ENCODE measurements at regions of chr15 and their contacts with region 1.

Region 1: DNA sequence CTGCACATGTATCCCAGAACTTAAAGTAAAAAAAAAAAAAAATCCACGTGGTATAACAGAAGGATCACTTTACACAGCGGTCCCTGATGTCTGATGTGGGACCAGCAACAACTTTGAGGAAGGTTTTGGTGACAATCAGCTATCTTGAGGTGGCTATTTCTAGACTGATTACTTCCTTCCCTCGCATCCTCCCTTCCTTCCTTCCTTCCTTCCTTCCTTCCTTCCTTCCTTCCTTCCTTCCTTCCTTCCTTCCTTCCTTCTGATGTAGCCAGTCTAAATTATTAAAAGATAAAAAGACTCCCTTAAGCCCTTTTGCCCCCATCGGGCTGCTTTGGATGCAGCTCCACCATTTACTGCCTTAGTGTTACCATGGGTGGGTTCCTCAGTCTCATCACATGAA is 14.9 kb downstream of the SORD start:
- DNase-seq: no peak
- ATAC-seq: no peak
- H3K4me3 ChIP-seq: no peak overlapping the region
- H3K4me3 Mint-ChIP-seq: no peak overlapping the region
- H3K27ac ChIP-seq: no peak overlapping the region
- H3K27ac Mint-ChIP-seq: no peak overlapping the region
- H3K4me1 ChIP-seq: peaks cover 2% of the 10 kb centered on the region
- H3K4me1 Mint-ChIP-seq: peaks cover 19% of the 10 kb centered on the region
- H3K27me3 ChIP-seq: no peaks in the 10 kb centered on the region
- H3K27me3 Mint-ChIP-seq: no peaks in the 10 kb centered on the region
- CTCF ChIP-seq: no peak

Region 2: GRCh38 chr15:44573386-44573785 is 464.6 kb before region 1 on chr15:
- CTCF ChIA-PET with region 1: interaction called, 12 read pairs
- POLR2A ChIA-PET with region 1: no interaction called
- intact Hi-C with region 1: loop called (anchors 2 to 5 kb)
- DNase-seq: no peak
- ATAC-seq: no peak
- H3K4me3 ChIP-seq: no peak overlapping the region
- H3K4me3 Mint-ChIP-seq: no peak overlapping the region
- H3K27ac ChIP-seq: no peak overlapping the region
- H3K27ac Mint-ChIP-seq: peak overlapping the region; percentile 76
- H3K4me1 ChIP-seq: peaks cover 3% of the 10 kb centered on the region
- H3K4me1 Mint-ChIP-seq: peaks cover 12% of the 10 kb centered on the region
- H3K27me3 ChIP-seq: no peaks in the 10 kb centered on the region
- H3K27me3 Mint-ChIP-seq: no peaks in the 10 kb centered on the region
- CTCF ChIP-seq: no peak

Region 3: DNA sequence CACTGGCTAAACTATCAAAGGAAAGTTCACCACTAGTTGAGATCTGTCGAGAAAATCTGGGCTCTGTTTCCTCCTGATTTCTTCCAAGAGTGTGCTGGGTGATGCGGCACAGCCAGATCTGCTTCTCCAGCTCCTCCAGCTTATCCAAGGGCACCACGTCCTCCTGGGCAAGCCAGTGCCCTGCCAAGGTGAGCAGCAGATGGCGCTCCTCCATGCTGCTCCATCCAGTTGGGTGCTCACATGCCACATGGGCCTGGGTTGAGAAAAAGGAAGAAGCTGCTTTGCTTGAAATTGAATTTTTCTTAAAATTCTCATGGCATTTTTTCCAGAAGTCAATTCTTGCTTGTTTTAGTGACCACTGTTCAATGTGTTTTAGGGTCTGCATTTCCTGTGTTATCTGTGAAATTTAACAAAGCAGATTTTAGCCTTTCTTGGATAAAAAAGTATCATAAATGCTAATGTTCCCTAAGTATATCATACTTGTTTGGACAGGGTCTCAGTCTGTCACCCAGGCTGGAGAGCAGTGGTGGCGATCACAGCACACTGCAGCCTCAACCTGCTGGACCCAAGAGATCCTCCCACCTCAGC is 453.7 kb before region 1 on chr15:
- CTCF ChIA-PET with region 1: interaction called, 6 read pairs
- POLR2A ChIA-PET with region 1: no interaction called
- intact Hi-C with region 1: loop called (anchors 2 to 5 kb)
- DNase-seq: peak; percentile 32 to 78 (median 54)
- ATAC-seq: peak; percentile 94
- H3K4me3 ChIP-seq: no peak overlapping the region
- H3K4me3 Mint-ChIP-seq: no peak overlapping the region
- H3K27ac ChIP-seq: no peak overlapping the region
- H3K27ac Mint-ChIP-seq: no peak overlapping the region
- H3K4me1 ChIP-seq: peaks cover 1% of the 10 kb centered on the region
- H3K4me1 Mint-ChIP-seq: peaks cover 21% of the 10 kb centered on the region
- H3K27me3 ChIP-seq: no peaks in the 10 kb centered on the region
- H3K27me3 Mint-ChIP-seq: no peaks in the 10 kb centered on the region
- CTCF ChIP-seq: peak; percentile 64

Region 4: GRCh38 chr15:44593042-44593736 is 444.7 kb before region 1 on chr15:
- CTCF ChIA-PET with region 1: interaction called, 3 read pairs
- POLR2A ChIA-PET with region 1: no interaction called
- intact Hi-C with region 1: loop called (anchors 2 to 5 kb)
- DNase-seq: peak in 7 of 14 experiments; percentile 6 to 71 (median 23)
- ATAC-seq: peak; percentile 85
- H3K4me3 ChIP-seq: no peak overlapping the region
- H3K4me3 Mint-ChIP-seq: no peak overlapping the region
- H3K27ac ChIP-seq: no peak overlapping the region
- H3K27ac Mint-ChIP-seq: peak overlapping the region; percentile 76
- H3K4me1 ChIP-seq: peaks cover 16% of the 10 kb centered on the region
- H3K4me1 Mint-ChIP-seq: peaks cover 14% of the 10 kb centered on the region
- H3K27me3 ChIP-seq: no peaks in the 10 kb centered on the region
- H3K27me3 Mint-ChIP-seq: no peaks in the 10 kb centered on the region
- CTCF ChIP-seq: peak; percentile 72

Region 5: GRCh38 chr15:44711356-44712107 is 326.4 kb before region 1 on chr15 and contains the start of gene B2M:
- CTCF ChIA-PET with region 1: no interaction called
- POLR2A ChIA-PET with region 1: no interaction called
- intact Hi-C with region 1: no loop called
- DNase-seq: peak; percentile 92 to 98 (median 96)
- ATAC-seq: peak; percentile 82
- H3K4me3 ChIP-seq: peak within 1 kb of the TSS; percentile 83
- H3K4me3 Mint-ChIP-seq: peak within 1 kb of the TSS; percentile 96
- H3K27ac ChIP-seq: peak within 1 kb of the TSS; percentile 99 to 100
- H3K27ac Mint-ChIP-seq: peak within 1 kb of the TSS; percentile 100
- H3K4me1 ChIP-seq: peaks cover 38% of the 10 kb centered on the region
- H3K4me1 Mint-ChIP-seq: peaks cover 70% of the 10 kb centered on the region
- H3K27me3 ChIP-seq: no peaks in the 10 kb centered on the region
- H3K27me3 Mint-ChIP-seq: no peaks in the 10 kb centered on the region
- CTCF ChIP-seq: no peak
- total RNA-seq, gene B2M: 4,357 to 4,503 TPM

Region 6: DNA sequence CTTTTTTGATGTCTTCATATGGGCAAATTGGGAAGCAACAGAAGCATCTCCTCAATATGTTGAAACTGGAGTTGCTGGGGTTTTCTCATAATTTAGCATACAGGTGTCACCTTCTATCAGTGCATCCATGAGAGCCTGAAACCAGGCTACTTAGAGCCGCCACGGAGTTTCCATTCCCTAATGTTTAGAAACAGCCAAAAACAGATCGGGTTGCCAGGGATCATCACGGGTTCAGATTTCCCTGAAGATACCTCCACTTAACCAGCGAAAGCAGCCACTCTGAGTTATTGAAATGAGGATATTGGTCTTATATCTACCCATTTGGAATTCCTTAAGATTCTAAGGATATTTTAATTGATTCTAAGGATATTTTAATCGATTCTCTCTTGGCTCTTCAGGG is 66.9 kb before region 1 on chr15:
- CTCF ChIA-PET with region 1: no interaction called
- POLR2A ChIA-PET with region 1: no interaction called
- intact Hi-C with region 1: loop called in 1 of 2 experiments (anchors 1 kb)
- DNase-seq: no peak
- ATAC-seq: no peak
- H3K4me3 ChIP-seq: no peak overlapping the region
- H3K4me3 Mint-ChIP-seq: no peak overlapping the region
- H3K27ac ChIP-seq: no peak overlapping the region
- H3K27ac Mint-ChIP-seq: no peak overlapping the region
- H3K4me1 ChIP-seq: no peaks in the 10 kb centered on the region
- H3K4me1 Mint-ChIP-seq: no peaks in the 10 kb centered on the region
- H3K27me3 ChIP-seq: no peaks in the 10 kb centered on the region
- H3K27me3 Mint-ChIP-seq: peaks cover 6% of the 10 kb centered on the region
- CTCF ChIP-seq: no peak

Region 7: DNA sequence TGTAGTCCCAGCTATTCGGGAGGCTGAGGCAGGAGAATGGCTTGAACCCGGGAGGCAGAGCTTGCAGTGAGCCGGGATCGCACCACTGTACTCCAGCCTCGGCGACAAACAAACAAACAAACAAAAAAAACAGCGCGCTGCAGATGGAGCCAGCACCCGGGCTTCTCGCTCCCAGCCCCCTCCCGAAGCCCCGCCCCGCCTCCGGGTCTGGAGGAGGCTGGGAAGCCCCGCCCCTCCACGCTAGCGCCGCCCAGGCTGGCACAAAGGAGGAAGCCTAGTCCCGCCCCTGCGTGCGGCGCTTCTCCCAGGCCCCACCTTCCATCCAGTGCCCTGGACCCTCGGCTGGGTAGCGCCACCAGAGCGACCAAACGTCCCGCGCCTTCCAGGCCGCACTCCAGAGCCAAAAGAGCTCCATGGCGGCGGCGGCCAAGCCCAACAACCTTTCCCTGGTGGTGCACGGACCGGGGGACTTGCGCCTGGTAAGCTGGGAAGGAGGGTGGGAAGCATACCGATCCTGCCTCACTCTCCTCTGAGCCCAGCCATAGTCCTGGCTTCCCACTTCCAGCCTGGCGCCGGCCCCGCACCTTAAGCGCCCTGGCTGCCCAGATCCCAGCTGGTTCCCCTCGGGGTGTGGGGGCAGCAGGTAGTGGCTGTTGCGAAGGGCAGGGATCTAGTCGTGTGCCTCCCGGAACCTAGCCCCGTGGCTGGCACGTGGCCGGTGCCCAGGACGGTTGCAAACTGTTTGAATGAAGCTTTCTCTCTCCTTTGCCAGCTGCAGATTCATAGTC is 14.9 kb before region 1 on chr15 and contains the start of gene SORD:
- CTCF ChIA-PET with region 1: interaction called, 5 read pairs
- POLR2A ChIA-PET with region 1: no interaction called
- intact Hi-C with region 1: loop called in 1 of 2 experiments (anchors 2 kb)
- DNase-seq: peak; percentile 76 to 98 (median 90)
- ATAC-seq: peak; percentile 99
- H3K4me3 ChIP-seq: peak within 1 kb of the TSS; percentile 92
- H3K4me3 Mint-ChIP-seq: peak within 1 kb of the TSS; percentile 87
- H3K27ac ChIP-seq: no peak within 1 kb of the TSS
- H3K27ac Mint-ChIP-seq: peak within 1 kb of the TSS; percentile 2
- H3K4me1 ChIP-seq: peaks cover 18% of the 10 kb centered on the region
- H3K4me1 Mint-ChIP-seq: peaks cover 22% of the 10 kb centered on the region
- H3K27me3 ChIP-seq: no peaks in the 10 kb centered on the region
- H3K27me3 Mint-ChIP-seq: peaks cover 22% of the 10 kb centered on the region
- CTCF ChIP-seq: no peak
- total RNA-seq, gene SORD: 1.7 to 1.8 TPM

Measured in CD4-positive, alpha-beta T cell (primary cell).